A673 (cell line): ENCODE measurements at regions of chr16 and their contacts with region 1.

Region 1: GRCh38 chr16:56950881-56951771 is 10.6 kb upstream of the CETP start:
- DNase-seq: peak; percentile 64
- H3K4me3 ChIP-seq: no peak overlapping the region
- H3K27ac ChIP-seq: no peak overlapping the region
- H3K4me1 ChIP-seq: no peaks in the 10 kb centered on the region
- H3K27me3 ChIP-seq: no peaks in the 10 kb centered on the region
- CTCF ChIP-seq: peak; percentile 77

Region 2: GRCh38 chr16:56657555-56658326 is 293.4 kb before region 1 on chr16 and contains the start of gene MT1F:
- CTCF ChIA-PET with region 1: no interaction called
- POLR2A ChIA-PET with region 1: no interaction called
- intact Hi-C with region 1: no loop called
- DNase-seq: peak; percentile 78
- H3K4me3 ChIP-seq: peak within 1 kb of the TSS; percentile 66
- H3K27ac ChIP-seq: peak within 1 kb of the TSS; percentile 53
- H3K4me1 ChIP-seq: no peaks in the 10 kb centered on the region
- H3K27me3 ChIP-seq: peaks cover 6% of the 10 kb centered on the region
- CTCF ChIP-seq: no peak
- total RNA-seq, gene MT1F: 7.7 and 26.9 TPM in 2 replicates

Region 3: GRCh38 chr16:56793492-56793891 is 157.6 kb before region 1 on chr16:
- CTCF ChIA-PET with region 1: interaction called, 6 read pairs
- POLR2A ChIA-PET with region 1: no interaction called
- intact Hi-C with region 1: loop called (anchors 2 kb)
- DNase-seq: no peak
- H3K4me3 ChIP-seq: no peak overlapping the region
- H3K27ac ChIP-seq: no peak overlapping the region
- H3K4me1 ChIP-seq: peaks cover 13% of the 10 kb centered on the region
- H3K27me3 ChIP-seq: no peaks in the 10 kb centered on the region
- CTCF ChIP-seq: peak; percentile 57

Region 4: GRCh38 chr16:56866943-56867830 is 83.9 kb before region 1 on chr16:
- CTCF ChIA-PET with region 1: interaction called, 6 read pairs
- POLR2A ChIA-PET with region 1: no interaction called
- intact Hi-C with region 1: loop called (anchors 1 kb)
- DNase-seq: peak; percentile 75
- H3K4me3 ChIP-seq: no peak overlapping the region
- H3K27ac ChIP-seq: no peak overlapping the region
- H3K4me1 ChIP-seq: no peaks in the 10 kb centered on the region
- H3K27me3 ChIP-seq: no peaks in the 10 kb centered on the region
- CTCF ChIP-seq: peak; percentile 79